Body of pancreas (tissue), 4 donors: ENCODE measurements at regions of chr16 and their contacts with region 1.

Region 1: GRCh38 chr16:88442727-88443576 is 10.1 kb upstream of the ZFPM1 start:
- DNase-seq: peak; percentile 80 to 88 (median 86)
- ATAC-seq: peak; percentile 93
- H3K4me3 ChIP-seq: no peak overlapping the region
- H3K27ac ChIP-seq: no peak overlapping the region
- H3K4me1 ChIP-seq: peaks cover 12% of the 10 kb centered on the region
- H3K27me3 ChIP-seq: no peaks in the 10 kb centered on the region
- CTCF ChIP-seq: peak; percentile 95 to 99 (median 97)
- POLR2A ChIP-seq: no peak

Region 2: GRCh38 chr16:88527186-88527936 is 84.4 kb after region 1 on chr16:
- intact Hi-C with region 1: loop called (anchors 5 kb)
- DNase-seq: peak; percentile 67 to 80 (median 70)
- ATAC-seq: peak; percentile 71
- H3K4me3 ChIP-seq: no peak overlapping the region
- H3K27ac ChIP-seq: no peak overlapping the region
- H3K4me1 ChIP-seq: peaks cover 36% of the 10 kb centered on the region
- H3K27me3 ChIP-seq: no peaks in the 10 kb centered on the region
- CTCF ChIP-seq: peak; percentile 76 to 92 (median 85)
- POLR2A ChIP-seq: no peak

Region 3: DNA sequence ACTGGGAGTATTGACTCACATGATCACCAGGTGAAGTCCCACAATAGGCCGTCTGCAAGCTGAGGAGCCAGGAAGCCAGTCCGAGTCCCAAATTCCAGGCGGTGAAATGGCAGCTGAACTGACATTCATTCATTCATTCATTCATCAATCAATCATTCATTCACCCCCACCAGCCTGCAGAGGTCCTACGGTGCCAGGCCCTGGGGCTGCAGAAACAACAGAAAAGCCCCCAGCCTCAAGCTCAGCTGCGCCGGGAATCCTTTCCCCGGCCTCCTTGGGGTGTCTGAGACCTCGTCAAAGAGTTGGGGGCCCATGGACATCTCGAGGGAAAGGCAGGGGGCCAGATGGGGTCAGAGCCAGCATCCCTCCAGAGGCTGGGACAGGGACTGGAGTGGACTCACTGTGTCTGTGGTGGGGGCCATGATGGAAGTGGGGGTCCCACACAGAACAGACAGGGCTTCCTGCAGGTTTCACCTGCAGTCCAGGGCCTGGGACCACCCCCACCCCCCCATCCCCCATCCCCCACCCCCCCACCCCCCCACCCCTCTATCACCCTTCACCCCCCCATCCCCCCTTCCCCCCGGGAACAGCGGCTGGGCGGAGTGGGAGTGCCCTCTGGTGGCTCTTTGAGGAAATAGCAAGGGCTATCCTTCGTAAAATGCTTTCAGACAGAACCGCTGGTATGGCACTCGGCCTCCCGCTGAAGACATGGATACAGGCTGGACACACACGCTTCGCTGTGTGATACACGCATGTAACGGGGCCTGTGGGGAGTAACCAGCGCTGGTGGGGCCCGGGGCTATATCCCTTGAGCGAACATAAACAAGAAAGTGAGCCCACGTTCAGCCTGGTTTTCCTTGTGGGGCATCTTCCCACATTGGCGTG is 118.8 kb after region 1 on chr16:
- intact Hi-C with region 1: loop called (anchors 5 kb)
- DNase-seq: peak; percentile 54 to 61 (median 55)
- ATAC-seq: peak; percentile 64
- H3K4me3 ChIP-seq: no peak overlapping the region
- H3K27ac ChIP-seq: no peak overlapping the region
- H3K4me1 ChIP-seq: peaks cover 13% of the 10 kb centered on the region
- H3K27me3 ChIP-seq: no peaks in the 10 kb centered on the region
- CTCF ChIP-seq: peak; percentile 39 to 75 (median 59)
- POLR2A ChIP-seq: no peak